GM12878 (cell line): ENCODE measurements at regions of chr16 and their contacts with region 1.

Region 1: GRCh38 chr16:10918294-10919002 is 23.8 kb downstream of the DEXI start:
- DNase-seq: peak; percentile 77
- ATAC-seq: peak; percentile 89
- H3K4me3 ChIP-seq: no peak overlapping the region
- H3K27ac ChIP-seq: peak overlapping the region; percentile 4; the same call in 1 of the 2 replicates
- H3K4me1 ChIP-seq: peaks cover 25% of the 10 kb centered on the region
- H3K27me3 ChIP-seq: no peaks in the 10 kb centered on the region
- CTCF ChIP-seq: peak; percentile 91 to 99 (median 99)
- EP300 ChIP-seq: no peak
- POLR2A ChIP-seq: peak; percentile 50; the same call in 1 of the 2 replicates
- RAD21 ChIP-seq: peak; percentile 97

Region 2: DNA sequence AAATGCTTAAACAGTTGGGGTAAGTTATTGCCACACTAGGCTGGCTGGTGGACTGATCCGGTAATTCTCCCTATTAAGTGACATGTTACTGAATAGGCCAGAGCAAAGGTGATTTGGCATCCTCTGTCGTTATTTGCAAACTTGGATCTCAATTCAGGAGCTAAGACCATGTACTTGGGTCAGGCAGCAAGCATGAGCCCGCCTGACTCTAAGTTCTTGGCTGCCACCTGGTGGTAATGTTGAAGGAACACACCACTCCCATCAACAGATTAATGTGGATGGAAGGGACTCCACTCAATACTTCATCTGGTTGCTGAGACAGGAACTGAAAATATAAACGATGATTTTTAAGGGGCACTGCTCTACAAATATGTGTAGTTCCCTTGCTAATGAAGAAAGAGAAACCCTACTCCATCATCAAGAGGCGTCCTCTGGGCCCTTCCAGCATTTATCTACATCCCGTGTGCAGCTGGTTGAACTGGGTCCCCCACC is 408.9 kb before region 1 on chr16:
- CTCF ChIA-PET with region 1: interaction called, 26 read pairs
- POLR2A ChIA-PET with region 1: no interaction called
- RAD21 ChIA-PET with region 1: interaction called, 11 read pairs
- SMC1A ChIA-PET with region 1: interaction called, 15 read pairs
- in situ Hi-C with region 1: no loop called
- intact Hi-C with region 1: loop called (anchors 2 kb)
- DNase-seq: peak; percentile 70
- ATAC-seq: peak; percentile 99
- H3K4me3 ChIP-seq: no peak overlapping the region
- H3K27ac ChIP-seq: no peak overlapping the region
- H3K4me1 ChIP-seq: peaks cover 3% of the 10 kb centered on the region; the same call in 1 of the 2 replicates
- H3K27me3 ChIP-seq: no peaks in the 10 kb centered on the region
- CTCF ChIP-seq: peak; percentile 77 to 92 (median 86)
- EP300 ChIP-seq: no peak
- POLR2A ChIP-seq: no peak
- RAD21 ChIP-seq: peak; percentile 97

Region 3: GRCh38 chr16:10743610-10744393 is 174.6 kb before region 1 on chr16 and contains the start of gene NUBP1:
- CTCF ChIA-PET with region 1: interaction called, 16 read pairs
- POLR2A ChIA-PET with region 1: no interaction called
- RAD21 ChIA-PET with region 1: interaction called, 40 read pairs
- SMC1A ChIA-PET with region 1: interaction called, 16 read pairs
- in situ Hi-C with region 1: loop called (anchors 5 kb)
- intact Hi-C with region 1: no loop called
- DNase-seq: peak; percentile 94
- ATAC-seq: peak; percentile 93
- H3K4me3 ChIP-seq: peak within 1 kb of the TSS; percentile 69
- H3K27ac ChIP-seq: peak within 1 kb of the TSS; percentile 74
- H3K4me1 ChIP-seq: peaks cover 39% of the 10 kb centered on the region
- H3K27me3 ChIP-seq: no peaks in the 10 kb centered on the region
- CTCF ChIP-seq: peak in 1 of 3 experiments; percentile 8; a peak in 1 of 6 replicates
- EP300 ChIP-seq: 0 out of 4 replicates have a peak, but pooled peaks of 1 of the 2 experiments have one; percentile 4
- POLR2A ChIP-seq: peak; percentile 96
- RAD21 ChIP-seq: no peak
- polyA plus RNA-seq, gene NUBP1: 31.0 to 36.3 TPM

Region 4: DNA sequence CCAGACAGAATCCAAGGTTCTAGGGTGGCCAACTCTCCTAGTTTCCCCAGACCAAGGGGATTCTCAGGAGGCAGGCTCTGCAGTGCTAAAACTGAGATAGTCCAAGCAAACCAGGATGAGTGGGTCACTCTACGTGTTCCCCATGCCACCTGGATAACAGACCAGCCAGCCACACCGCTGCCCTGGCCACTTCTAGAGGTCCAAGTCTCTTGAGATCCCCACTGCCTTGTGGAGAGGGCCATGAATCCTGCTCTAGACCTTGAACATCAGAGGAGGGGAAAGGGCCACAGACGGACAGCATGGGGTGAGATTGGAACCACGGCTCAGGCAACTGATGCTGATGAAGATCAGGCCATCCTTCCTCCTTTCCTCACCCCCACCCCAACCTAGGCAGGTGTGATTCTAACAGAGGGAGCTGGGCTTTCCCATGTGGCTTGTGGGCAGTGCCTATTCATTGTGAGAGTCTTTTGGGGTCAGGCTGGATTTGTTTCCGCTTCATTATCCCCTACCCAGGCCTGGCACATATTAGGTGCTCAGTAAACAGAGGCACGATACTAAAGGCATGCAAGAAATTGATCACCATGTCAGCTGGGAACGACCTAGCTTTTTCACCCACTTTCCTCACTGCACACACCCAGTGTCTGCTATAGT is 83.0 kb before region 1 on chr16:
- CTCF ChIA-PET with region 1: interaction called, 7 read pairs
- POLR2A ChIA-PET with region 1: no interaction called
- RAD21 ChIA-PET with region 1: interaction called, 3 read pairs
- SMC1A ChIA-PET with region 1: interaction called, 4 read pairs
- in situ Hi-C with region 1: no loop called
- intact Hi-C with region 1: loop called (anchors 10 kb)
- DNase-seq: peak; percentile 84
- ATAC-seq: peak; percentile 76
- H3K4me3 ChIP-seq: no peak overlapping the region
- H3K27ac ChIP-seq: peak overlapping the region; percentile 33
- H3K4me1 ChIP-seq: peaks cover 49% of the 10 kb centered on the region
- H3K27me3 ChIP-seq: no peaks in the 10 kb centered on the region
- CTCF ChIP-seq: no peak
- EP300 ChIP-seq: peak; percentile 86 to 89
- POLR2A ChIP-seq: no peak
- RAD21 ChIP-seq: no peak; the same call in 1 of the 2 replicates

Region 5: GRCh38 chr16:10883004-10883403 is 35.4 kb before region 1 on chr16:
- CTCF ChIA-PET with region 1: interaction called, 91 read pairs
- POLR2A ChIA-PET with region 1: interaction called, 8 read pairs
- RAD21 ChIA-PET with region 1: interaction called, 87 read pairs
- SMC1A ChIA-PET with region 1: interaction called, 79 read pairs
- in situ Hi-C with region 1: no loop called
- intact Hi-C with region 1: no loop called
- DNase-seq: no peak
- ATAC-seq: no peak
- H3K4me3 ChIP-seq: peak overlapping the region; percentile 14; the same call in 1 of the 2 replicates
- H3K27ac ChIP-seq: peak overlapping the region; percentile 8; the same call in 1 of the 2 replicates
- H3K4me1 ChIP-seq: peaks cover 64% of the 10 kb centered on the region
- H3K27me3 ChIP-seq: no peaks in the 10 kb centered on the region
- CTCF ChIP-seq: no peak
- EP300 ChIP-seq: no peak
- POLR2A ChIP-seq: no peak
- RAD21 ChIP-seq: no peak

Region 6: GRCh38 chr16:10895053-10895946 is 23.1 kb before region 1 on chr16:
- CTCF ChIA-PET with region 1: interaction called, 38 read pairs
- POLR2A ChIA-PET with region 1: interaction called, 16 read pairs
- RAD21 ChIA-PET with region 1: interaction called, 48 read pairs
- SMC1A ChIA-PET with region 1: interaction called, 19 read pairs
- in situ Hi-C with region 1: no loop called
- intact Hi-C with region 1: loop called (anchors 2 kb)
- DNase-seq: no peak
- ATAC-seq: no peak
- H3K4me3 ChIP-seq: no peak overlapping the region
- H3K27ac ChIP-seq: no peak overlapping the region
- H3K4me1 ChIP-seq: peaks cover 68% of the 10 kb centered on the region
- H3K27me3 ChIP-seq: no peaks in the 10 kb centered on the region
- CTCF ChIP-seq: no peak
- EP300 ChIP-seq: no peak
- POLR2A ChIP-seq: no peak
- RAD21 ChIP-seq: no peak

Region 7: DNA sequence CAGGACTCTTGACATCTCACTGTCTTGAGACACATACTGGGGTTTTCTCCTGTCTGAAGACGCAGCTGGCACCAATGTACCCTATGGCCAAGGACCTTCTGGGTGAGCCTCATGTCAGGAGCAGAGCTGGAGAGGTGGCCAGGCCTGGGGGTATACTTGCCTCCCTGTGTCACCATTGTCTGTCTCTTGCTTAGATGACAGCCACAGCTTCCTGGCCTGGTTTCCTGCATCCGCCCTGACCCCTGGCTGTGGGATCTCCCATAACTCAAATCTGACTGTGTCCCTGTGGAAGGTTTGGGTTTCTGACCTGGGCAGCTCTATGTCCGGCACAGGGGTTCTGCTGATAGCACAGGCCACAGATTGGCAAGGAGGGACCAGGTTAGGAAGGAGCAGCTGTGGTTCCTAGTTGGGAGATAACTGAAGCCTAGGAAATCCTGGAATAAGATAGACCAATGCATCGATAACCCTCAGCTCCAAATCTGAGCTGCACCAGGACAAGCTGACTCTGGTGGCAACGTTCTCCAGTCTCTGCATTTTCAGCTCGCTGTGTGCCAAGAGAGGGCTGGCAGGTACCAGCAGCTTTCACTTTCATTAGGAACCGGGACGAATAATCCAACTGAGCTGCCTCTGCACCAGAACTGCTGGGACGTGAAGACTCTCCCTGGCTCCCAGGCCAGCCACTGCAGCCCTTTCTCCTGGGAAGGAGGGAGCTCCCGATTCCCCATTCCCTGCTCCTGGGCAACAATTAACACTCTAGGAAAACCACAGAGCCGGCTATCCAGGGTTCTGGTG is 18.8 kb after region 1 on chr16:
- CTCF ChIA-PET with region 1: interaction called, 14 read pairs
- POLR2A ChIA-PET with region 1: interaction called, 16 read pairs
- RAD21 ChIA-PET with region 1: interaction called, 4 read pairs
- SMC1A ChIA-PET with region 1: interaction called, 9 read pairs
- in situ Hi-C with region 1: no loop called
- intact Hi-C with region 1: no loop called
- DNase-seq: no peak
- ATAC-seq: peak; percentile 4
- H3K4me3 ChIP-seq: peak overlapping the region; percentile 82; the same call in 1 of the 2 replicates
- H3K27ac ChIP-seq: peak overlapping the region; percentile 23
- H3K4me1 ChIP-seq: peaks cover 42% of the 10 kb centered on the region
- H3K27me3 ChIP-seq: no peaks in the 10 kb centered on the region
- CTCF ChIP-seq: peak in 1 of 3 experiments; percentile 22; a peak in 1 of 6 replicates
- EP300 ChIP-seq: no peak
- POLR2A ChIP-seq: no peak; the same call in 1 of the 2 replicates
- RAD21 ChIP-seq: no peak